BJ (cell line): ENCODE measurements at regions of chr2 and their contacts with region 1.

Region 1: GRCh38 chr2:236343400-236344161 is 79.4 kb upstream of the ASB18 start:
- DNase-seq: peak; percentile 10
- H3K4me3 ChIP-seq: no peak overlapping the region
- H3K27me3 ChIP-seq: no peaks in the 10 kb centered on the region; the same call in 1 of the 2 replicates
- CTCF ChIP-seq: peak; percentile 89

Region 2: DNA sequence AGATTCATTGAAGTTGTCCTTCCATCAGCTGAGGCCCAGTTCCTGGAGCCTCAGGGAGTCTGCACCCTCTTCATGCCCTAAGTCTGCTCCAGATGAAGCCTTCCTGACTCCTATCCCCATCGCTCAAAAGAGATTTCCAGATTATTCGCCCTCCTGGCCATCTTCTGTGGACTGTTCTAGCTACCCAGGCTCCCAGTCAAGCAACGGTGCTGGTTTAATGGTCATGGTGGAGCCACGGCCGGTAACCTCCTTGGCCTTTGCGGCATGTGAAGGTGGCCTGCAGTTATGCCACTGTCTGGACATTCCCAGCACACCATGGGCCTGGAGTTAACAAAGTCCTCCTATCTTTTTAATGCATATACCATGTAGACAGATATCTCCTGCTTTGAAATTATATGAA is 60.8 kb after region 1 on chr2:
- CTCF ChIA-PET with region 1: no interaction called
- POLR2A ChIA-PET with region 1: no interaction called
- DNase-seq: no peak
- H3K4me3 ChIP-seq: no peak overlapping the region
- H3K27me3 ChIP-seq: no peaks in the 10 kb centered on the region
- CTCF ChIP-seq: no peak

Region 3: GRCh38 chr2:237060534-237061312 is 717.1 kb after region 1 on chr2:
- CTCF ChIA-PET with region 1: interaction called, 91 read pairs
- POLR2A ChIA-PET with region 1: no interaction called
- DNase-seq: peak; percentile 5
- H3K4me3 ChIP-seq: no peak overlapping the region
- H3K27me3 ChIP-seq: no peaks in the 10 kb centered on the region; the same call in 1 of the 2 replicates
- CTCF ChIP-seq: peak; percentile 72

Region 4: DNA sequence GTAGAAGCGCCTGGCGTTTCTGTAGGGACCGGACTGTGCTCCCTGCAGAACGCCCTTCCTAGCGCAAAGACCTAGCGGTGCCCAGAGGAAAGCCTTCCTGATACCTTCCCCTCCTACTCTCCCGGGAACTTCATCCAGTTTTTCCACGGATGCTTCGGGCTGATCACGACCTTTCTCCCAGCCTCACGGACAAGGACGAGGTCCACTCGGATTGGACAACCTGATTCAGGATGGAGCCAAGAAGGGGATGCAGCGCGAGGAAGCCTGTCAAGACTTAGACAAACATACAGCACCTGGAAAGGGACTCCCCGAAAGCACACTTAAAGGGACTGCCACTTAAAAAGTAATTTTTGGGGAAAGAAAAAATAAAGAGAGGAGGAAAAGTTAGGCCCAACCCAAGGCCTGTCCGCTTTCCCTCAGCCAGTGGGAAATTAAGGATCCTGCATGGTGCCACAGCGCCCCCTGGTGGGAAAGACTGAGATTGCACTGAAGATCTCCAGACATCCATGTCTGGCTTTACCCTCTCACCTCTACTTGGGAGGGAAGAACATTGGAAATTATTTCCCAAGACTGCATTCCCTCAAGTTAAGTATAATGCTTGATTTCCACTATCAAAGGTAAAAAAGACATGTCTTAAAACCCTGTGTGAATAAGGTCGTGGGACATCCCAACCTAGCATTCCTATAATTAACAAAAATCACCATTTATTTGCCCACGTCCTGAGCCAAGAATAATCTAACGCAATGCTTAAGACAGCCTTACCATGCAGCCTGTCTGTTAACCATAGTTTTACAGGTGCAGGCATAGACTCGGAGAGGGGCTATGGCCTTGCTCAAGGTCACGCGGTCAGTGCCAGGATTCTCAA is 728.7 kb after region 1 on chr2:
- CTCF ChIA-PET with region 1: interaction called, 11 read pairs
- POLR2A ChIA-PET with region 1: no interaction called
- DNase-seq: no peak
- H3K4me3 ChIP-seq: no peak overlapping the region
- H3K27me3 ChIP-seq: no peaks in the 10 kb centered on the region
- CTCF ChIP-seq: peak; percentile 96